ENCODE measurements at regions of chr4 and their contacts with region 1.

Region 1: GRCh38 chr4:100162027-100162685 is 28.1 kb downstream of the DDIT4L start:
- DNase-seq: no peak
- H3K4me3 ChIP-seq: no peak overlapping the region
- H3K27me3 ChIP-seq: no peaks in the 10 kb centered on the region
- CTCF ChIP-seq: no peak

Region 2: GRCh38 chr4:100317032-100317864 is 155.1 kb after region 1 on chr4:
- CTCF ChIA-PET with region 1: no interaction called
- POLR2A ChIA-PET with region 1: interaction called, 11 read pairs
- DNase-seq: no peak
- H3K4me3 ChIP-seq: no peak overlapping the region
- H3K27me3 ChIP-seq: no peaks in the 10 kb centered on the region
- CTCF ChIP-seq: no peak

Measured in BJ (cell line).